ENCODE measurements at regions of chr17 and their contacts with region 1.

Region 1: GRCh38 chr17:28726226-28727130 is at the start of gene TLCD1:
- DNase-seq: peak; percentile 99
- ATAC-seq: peak; percentile 29
- H3K4me3 Mint-ChIP-seq: peak within 1 kb of the TSS; percentile 93
- H3K27ac Mint-ChIP-seq: peak within 1 kb of the TSS; percentile 99
- H3K4me1 Mint-ChIP-seq: peaks cover 44% of the 10 kb centered on the region
- H3K27me3 Mint-ChIP-seq: no peaks in the 10 kb centered on the region
- CTCF ChIP-seq: peak; percentile 96
- total RNA-seq, gene TLCD1: 36.0 to 41.2 TPM (median 36.5 TPM) in 3 replicates

Region 2: DNA sequence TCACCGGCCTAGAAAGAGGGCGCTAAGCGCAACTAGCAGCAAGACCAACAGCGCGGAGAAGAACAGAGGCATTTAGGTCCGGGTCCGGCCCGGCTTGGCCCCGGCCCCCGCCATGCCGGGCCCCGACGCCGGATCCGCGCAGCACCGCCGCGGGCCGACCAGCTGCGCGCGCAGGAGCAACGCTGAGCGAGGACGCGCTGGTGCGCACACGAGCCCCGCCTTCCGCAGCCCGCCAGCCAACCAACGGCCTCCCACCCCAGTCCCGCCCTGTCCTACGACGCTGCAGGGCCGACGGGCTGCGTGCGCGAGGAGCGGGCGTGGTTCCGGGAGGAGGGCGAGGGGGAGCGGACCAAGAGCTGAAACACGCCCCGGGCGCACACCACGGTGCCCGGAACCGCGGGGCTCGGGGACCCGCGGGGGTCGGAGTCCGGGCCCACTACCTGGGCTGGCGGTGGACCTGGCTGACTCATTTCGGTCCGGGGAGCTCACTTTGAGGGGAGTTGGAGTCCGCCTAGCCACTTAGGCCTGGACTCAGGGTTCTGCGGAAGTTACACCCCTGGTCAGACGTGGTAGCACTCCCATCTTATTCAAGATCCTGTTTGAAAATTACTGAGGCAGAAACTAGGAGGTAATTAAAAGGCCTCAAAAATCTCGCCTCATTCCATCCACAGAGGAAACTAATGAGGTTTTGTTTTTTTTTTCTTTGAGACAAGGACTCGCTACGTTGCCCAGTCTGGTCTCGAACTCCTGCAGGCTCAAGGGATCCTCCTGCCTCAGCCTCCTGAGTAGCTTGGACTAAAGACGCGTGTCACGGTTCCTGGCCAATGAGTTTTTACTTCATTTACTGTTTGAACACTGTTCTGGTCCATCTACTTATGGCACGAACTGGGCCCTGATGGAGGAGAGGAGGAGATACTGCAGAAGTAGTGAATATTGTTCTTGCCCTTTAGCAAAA is 81.2 kb before region 1 on chr17 and contains the start of gene BLTP2:
- CTCF ChIA-PET with region 1: interaction called, 23 read pairs
- POLR2A ChIA-PET with region 1: interaction called, 10 read pairs
- DNase-seq: peak; percentile 95
- ATAC-seq: peak; percentile 98
- H3K4me3 Mint-ChIP-seq: peak within 1 kb of the TSS; percentile 93
- H3K27ac Mint-ChIP-seq: peak within 1 kb of the TSS; percentile 96
- H3K4me1 Mint-ChIP-seq: peaks cover 24% of the 10 kb centered on the region
- H3K27me3 Mint-ChIP-seq: no peaks in the 10 kb centered on the region
- CTCF ChIP-seq: no peak
- total RNA-seq, gene BLTP2: 111 to 139 TPM (median 116 TPM) in 3 replicates

Region 3: DNA sequence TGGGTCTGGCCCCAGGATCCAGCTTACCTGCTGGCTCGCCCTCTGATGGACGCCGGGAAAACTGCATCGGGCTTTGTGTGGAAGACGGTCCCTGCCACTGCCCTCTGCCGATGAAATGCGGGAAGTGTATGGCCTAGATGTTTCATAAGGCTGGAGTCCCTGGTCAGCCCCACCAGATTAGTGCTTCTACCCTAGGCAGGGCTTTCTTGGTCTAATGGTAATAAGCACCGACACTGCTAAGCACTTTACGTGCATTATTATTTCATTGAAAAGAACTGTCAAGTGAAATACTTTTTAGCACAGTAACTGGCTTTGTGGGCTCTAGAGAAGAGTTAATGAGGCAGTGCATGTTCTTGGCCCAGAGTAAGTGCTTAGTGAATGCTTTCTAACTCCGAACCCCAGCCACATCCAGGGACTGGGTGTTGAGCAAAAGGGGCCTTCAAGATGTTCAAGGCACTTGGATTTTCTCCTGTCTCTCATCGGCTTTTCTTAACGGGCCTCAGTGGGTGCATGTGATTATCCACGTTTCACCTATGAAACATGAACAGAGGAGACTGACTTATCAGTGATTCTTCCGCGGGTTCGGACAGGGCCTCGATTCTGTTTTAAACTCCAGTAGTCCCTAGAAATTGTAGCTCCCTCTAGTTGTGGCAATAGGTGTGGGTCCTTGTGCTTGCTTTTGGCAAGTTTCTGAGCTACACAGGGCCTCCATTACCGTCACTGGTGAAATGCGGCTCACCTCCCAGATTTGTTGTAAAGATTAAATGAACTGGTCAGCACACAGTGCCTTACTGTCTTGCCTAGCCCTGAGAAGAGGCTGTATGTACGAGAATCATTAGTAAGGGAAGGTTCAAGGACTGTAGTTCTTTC is 23.9 kb after region 1 on chr17:
- CTCF ChIA-PET with region 1: interaction called, 541 read pairs
- POLR2A ChIA-PET with region 1: interaction called, 310 read pairs
- DNase-seq: peak; percentile 96
- ATAC-seq: peak; percentile 57
- H3K4me3 Mint-ChIP-seq: no peak overlapping the region
- H3K27ac Mint-ChIP-seq: peak overlapping the region; percentile 54
- H3K4me1 Mint-ChIP-seq: peaks cover 47% of the 10 kb centered on the region
- H3K27me3 Mint-ChIP-seq: no peaks in the 10 kb centered on the region
- CTCF ChIP-seq: peak; percentile 88

Region 4: DNA sequence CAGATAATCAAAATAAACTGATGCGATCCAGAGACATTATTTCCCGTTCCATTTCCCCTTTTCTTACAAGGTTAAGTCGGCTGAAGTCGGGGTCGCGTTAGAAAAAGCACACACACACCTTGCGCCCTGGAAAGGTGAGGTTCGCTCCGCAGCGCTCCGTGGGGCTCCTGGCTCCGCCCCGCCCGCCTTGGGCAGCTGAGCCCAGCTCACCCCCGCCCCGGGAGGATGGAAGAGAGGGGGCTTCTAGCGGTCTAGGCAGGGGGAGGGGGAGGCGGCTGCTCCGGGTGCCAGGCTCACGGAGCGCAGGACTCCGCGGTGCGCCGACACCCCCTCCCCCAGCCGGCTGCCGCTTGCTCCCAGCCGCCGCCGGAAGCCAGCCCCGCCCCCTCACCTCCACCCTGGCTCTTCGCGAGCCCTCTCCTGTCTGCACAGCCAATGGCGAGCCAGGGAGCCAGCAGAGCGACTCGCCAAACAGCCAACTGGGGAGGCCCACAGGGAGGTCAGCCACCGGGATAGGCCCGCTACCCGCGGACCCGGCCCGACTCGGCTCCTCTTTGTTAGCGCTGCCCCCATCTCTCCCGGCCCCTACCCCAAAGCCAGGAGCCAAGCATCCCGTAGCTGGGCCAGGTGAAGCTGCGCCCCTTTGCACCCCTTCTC is 85.7 kb after region 1 on chr17:
- CTCF ChIA-PET with region 1: interaction called, 21 read pairs
- POLR2A ChIA-PET with region 1: interaction called, 7 read pairs
- DNase-seq: peak; percentile 99
- ATAC-seq: peak; percentile 97
- H3K4me3 Mint-ChIP-seq: peak overlapping the region; percentile 88
- H3K27ac Mint-ChIP-seq: peak overlapping the region; percentile 92
- H3K4me1 Mint-ChIP-seq: peaks cover 51% of the 10 kb centered on the region
- H3K27me3 Mint-ChIP-seq: no peaks in the 10 kb centered on the region
- CTCF ChIP-seq: no peak

Region 5: DNA sequence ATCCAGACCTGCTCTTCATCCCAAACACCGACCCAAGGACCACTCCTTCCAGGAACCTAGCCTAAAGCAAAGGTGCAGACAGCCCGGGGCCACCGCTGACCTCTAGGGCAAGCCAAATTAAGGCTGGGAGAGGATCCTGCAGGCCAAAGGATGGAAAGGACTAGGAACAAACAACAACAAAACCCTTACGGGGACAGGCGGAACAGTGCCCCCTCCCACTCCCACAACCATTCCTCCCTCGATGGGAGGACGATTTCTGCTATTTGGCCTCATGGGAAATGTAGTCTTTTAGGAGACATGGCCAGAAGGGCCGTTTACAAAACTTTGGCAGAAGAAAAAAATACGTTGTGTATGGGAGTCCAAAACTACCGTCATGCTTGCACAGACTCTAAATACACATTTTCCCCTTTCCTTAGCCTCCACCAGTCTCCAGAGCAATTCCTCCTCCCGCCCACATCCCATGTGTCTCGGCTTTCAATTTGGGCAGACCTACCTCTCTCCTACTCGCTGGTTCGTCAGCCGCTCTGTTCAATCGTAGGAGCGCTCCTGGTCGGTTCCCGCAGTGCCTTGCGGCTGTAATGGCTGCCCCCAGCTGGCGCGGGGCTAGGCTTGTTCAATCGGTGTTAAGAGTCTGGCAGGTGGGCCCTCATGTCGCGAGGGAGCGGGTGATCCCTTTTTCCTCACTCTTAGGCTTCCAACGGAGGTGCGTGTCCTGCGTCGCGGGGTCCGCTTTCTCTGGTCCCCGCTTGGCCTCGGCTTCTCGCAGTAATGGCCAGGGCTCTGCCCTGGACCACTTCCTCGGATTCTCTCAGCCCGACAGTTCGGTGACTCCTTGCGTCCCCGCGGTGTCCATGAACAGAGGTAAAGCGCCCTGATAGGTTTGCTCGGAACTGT is 128.2 kb after region 1 on chr17 and contains the start of gene ERAL1:
- CTCF ChIA-PET with region 1: interaction called, 14 read pairs
- POLR2A ChIA-PET with region 1: no interaction called
- DNase-seq: peak; percentile 87
- ATAC-seq: peak; percentile 98
- H3K4me3 Mint-ChIP-seq: peak within 1 kb of the TSS; percentile 97
- H3K27ac Mint-ChIP-seq: peak within 1 kb of the TSS; percentile 38
- H3K4me1 Mint-ChIP-seq: peaks cover 7% of the 10 kb centered on the region
- H3K27me3 Mint-ChIP-seq: no peaks in the 10 kb centered on the region
- CTCF ChIP-seq: no peak
- total RNA-seq, gene ERAL1: 70.1 to 77.0 TPM (median 72.0 TPM) in 3 replicates

Region 6: GRCh38 chr17:28883967-28884702 is 157.7 kb after region 1 on chr17:
- CTCF ChIA-PET with region 1: interaction called, 35 read pairs
- POLR2A ChIA-PET with region 1: interaction called, 10 read pairs
- DNase-seq: no peak
- ATAC-seq: no peak
- H3K4me3 Mint-ChIP-seq: no peak overlapping the region
- H3K27ac Mint-ChIP-seq: no peak overlapping the region
- H3K4me1 Mint-ChIP-seq: peaks cover 8% of the 10 kb centered on the region
- H3K27me3 Mint-ChIP-seq: no peaks in the 10 kb centered on the region
- CTCF ChIP-seq: no peak

Region 7: GRCh38 chr17:28916302-28916934 is 189.9 kb after region 1 on chr17:
- CTCF ChIA-PET with region 1: interaction called, 27 read pairs
- POLR2A ChIA-PET with region 1: no interaction called
- DNase-seq: peak; percentile 53
- ATAC-seq: peak; percentile 88
- H3K4me3 Mint-ChIP-seq: no peak overlapping the region
- H3K27ac Mint-ChIP-seq: no peak overlapping the region
- H3K4me1 Mint-ChIP-seq: no peaks in the 10 kb centered on the region
- H3K27me3 Mint-ChIP-seq: no peaks in the 10 kb centered on the region
- CTCF ChIP-seq: peak; percentile 62

Measured in WTC11 (cell line).